ENCODE measurements at regions of chr9 and their contacts with region 1.

Region 1: DNA sequence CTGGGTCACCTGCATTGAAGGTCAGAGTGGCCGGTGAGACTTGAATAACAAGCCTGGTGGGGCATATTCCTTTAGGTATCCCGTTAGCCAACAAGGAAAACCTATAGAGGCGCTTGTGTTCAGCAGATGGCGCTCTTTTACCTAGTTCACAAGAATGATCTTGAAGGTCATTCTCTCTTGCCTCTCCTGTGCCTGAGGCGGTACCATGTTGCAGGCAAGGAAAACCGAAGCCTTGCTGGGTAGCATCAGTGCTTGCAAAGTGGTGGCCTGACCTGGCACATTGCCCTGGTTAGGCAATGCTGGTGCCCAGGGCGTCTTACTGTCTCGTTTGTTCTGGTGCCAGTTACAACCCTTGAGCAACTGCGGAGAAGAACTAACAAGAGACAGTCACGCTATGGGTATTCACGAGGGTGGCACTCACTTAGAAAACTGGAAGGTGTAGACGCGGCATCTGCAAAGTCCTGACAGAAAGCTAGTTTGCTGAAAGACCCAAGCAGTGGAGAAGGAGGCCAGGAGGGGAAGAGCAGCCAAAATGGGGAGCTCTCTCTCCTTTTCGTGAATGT is 56.7 kb downstream of the AOPEP start:
- DNase-seq: peak; percentile 98
- ATAC-seq: peak; percentile 89
- H3K4me3 ChIP-seq: no peak overlapping the region
- H3K27ac ChIP-seq: peak overlapping the region; percentile 80
- H3K4me1 ChIP-seq: peaks cover 21% of the 10 kb centered on the region
- H3K27me3 ChIP-seq: no peaks in the 10 kb centered on the region
- CTCF ChIP-seq: peak; percentile 81

Region 2: GRCh38 chr9:94672811-94673487 is 110.2 kb before region 1 on chr9:
- CTCF ChIA-PET with region 1: interaction called, 3 read pairs
- POLR2A ChIA-PET with region 1: interaction called, 4 read pairs
- intact Hi-C with region 1: loop called (anchors 2 kb)
- DNase-seq: peak; percentile 79
- ATAC-seq: peak; percentile 72
- H3K4me3 ChIP-seq: no peak overlapping the region
- H3K27ac ChIP-seq: peak overlapping the region; percentile 53
- H3K4me1 ChIP-seq: peaks cover 17% of the 10 kb centered on the region
- H3K27me3 ChIP-seq: no peaks in the 10 kb centered on the region
- CTCF ChIP-seq: no peak

Region 3: GRCh38 chr9:94805585-94805984 is 22.4 kb after region 1 on chr9:
- CTCF ChIA-PET with region 1: interaction called, 4 read pairs
- POLR2A ChIA-PET with region 1: no interaction called
- intact Hi-C with region 1: loop called (anchors 1 kb)
- DNase-seq: peak; percentile 89
- ATAC-seq: peak; percentile 100
- H3K4me3 ChIP-seq: no peak overlapping the region
- H3K27ac ChIP-seq: peak overlapping the region; percentile 97
- H3K4me1 ChIP-seq: peaks cover 28% of the 10 kb centered on the region
- H3K27me3 ChIP-seq: no peaks in the 10 kb centered on the region
- CTCF ChIP-seq: no peak

Region 4: DNA sequence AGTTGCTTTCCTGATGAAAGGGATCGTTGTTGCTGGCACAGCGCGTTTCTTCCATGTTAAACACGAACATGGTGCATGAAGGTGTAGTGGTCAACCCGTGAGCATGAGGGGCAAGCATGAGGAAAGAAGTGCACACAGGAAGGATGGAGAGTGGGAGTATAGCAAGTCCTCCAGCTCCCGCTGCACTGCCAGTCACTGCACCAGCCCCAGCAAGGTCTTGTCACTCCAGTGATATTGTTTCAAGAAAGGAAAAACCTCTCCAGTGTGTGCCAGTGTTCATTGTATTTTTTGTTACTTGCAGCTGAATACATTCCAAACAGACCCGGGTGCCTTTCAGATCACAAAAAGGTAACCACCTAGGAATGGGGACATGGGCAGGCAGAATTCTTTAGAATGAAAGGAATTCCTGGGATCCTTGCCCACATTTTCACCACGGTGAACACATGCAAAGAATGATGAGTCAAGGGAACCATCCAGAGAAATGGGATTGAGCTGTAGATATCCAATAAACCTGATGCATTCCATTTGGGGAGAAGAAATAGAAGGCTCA is 129.6 kb after region 1 on chr9:
- CTCF ChIA-PET with region 1: no interaction called
- POLR2A ChIA-PET with region 1: no interaction called
- intact Hi-C with region 1: loop called (anchors 1 kb)
- DNase-seq: peak; percentile 94
- ATAC-seq: peak; percentile 71
- H3K4me3 ChIP-seq: peak overlapping the region; percentile 7
- H3K27ac ChIP-seq: peak overlapping the region; percentile 74
- H3K4me1 ChIP-seq: peaks cover 59% of the 10 kb centered on the region
- H3K27me3 ChIP-seq: no peaks in the 10 kb centered on the region
- CTCF ChIP-seq: no peak

Region 5: GRCh38 chr9:95073021-95073607 is 289.9 kb after region 1 on chr9:
- CTCF ChIA-PET with region 1: no interaction called
- POLR2A ChIA-PET with region 1: no interaction called
- intact Hi-C with region 1: loop called (anchors 5 kb)
- DNase-seq: peak; percentile 29
- ATAC-seq: peak; percentile 84
- H3K4me3 ChIP-seq: no peak overlapping the region
- H3K27ac ChIP-seq: no peak overlapping the region
- H3K4me1 ChIP-seq: no peaks in the 10 kb centered on the region
- H3K27me3 ChIP-seq: no peaks in the 10 kb centered on the region
- CTCF ChIP-seq: peak; percentile 43; the same call in 1 of the 2 replicates